Naive thymus-derived CD4-positive, alpha-beta T cell (primary cell): ENCODE measurements at regions of chr13 and their contacts with region 1.

Region 1: DNA sequence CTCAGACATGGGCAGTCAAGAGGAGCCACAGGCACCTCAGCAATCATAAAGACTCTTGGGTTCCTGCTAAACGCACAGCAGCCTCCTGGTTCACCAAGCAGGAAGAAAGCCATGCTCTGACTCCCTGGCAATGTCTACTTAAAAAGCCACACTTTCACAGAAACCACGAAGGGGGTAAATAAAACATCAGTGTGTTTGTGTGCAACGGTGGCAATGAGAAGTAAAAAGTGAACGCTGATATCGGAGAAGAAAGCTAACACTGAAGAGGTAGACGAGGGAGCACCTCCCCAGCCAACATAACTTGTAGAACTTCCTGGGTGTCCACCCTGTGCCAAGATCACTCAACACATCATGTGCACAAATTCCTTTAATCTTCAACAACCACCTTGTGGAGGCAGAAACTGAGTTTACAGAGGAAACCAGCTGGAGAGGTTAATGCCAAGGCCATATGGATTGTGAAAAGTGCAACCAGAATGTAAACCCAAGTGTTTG is 30.2 kb downstream of the HSPH1 start:
- DNase-seq: peak in 2 of 9 donors; percentile 6 to 8
- ATAC-seq: peak; percentile 30
- H3K4me3 ChIP-seq: no peak overlapping the region
- H3K4me3 Mint-ChIP-seq: peak overlapping the region in 3 of 10 donors; percentile 29 to 43 (median 41)
- H3K27ac ChIP-seq: no peak overlapping the region
- H3K27ac Mint-ChIP-seq: peak overlapping the region in 4 of 9 donors; percentile 11 to 62 (median 42)
- H3K4me1 ChIP-seq: no peaks in the 10 kb centered on the region
- H3K4me1 Mint-ChIP-seq: peaks cover 3 to 43% (median 30%) of the 10 kb centered on the region in 7 donors
- H3K27me3 ChIP-seq: no peaks in the 10 kb centered on the region
- H3K27me3 Mint-ChIP-seq: peaks cover 8 to 23% (median 15%) of the 10 kb centered on the region in 5 donors

Region 2: DNA sequence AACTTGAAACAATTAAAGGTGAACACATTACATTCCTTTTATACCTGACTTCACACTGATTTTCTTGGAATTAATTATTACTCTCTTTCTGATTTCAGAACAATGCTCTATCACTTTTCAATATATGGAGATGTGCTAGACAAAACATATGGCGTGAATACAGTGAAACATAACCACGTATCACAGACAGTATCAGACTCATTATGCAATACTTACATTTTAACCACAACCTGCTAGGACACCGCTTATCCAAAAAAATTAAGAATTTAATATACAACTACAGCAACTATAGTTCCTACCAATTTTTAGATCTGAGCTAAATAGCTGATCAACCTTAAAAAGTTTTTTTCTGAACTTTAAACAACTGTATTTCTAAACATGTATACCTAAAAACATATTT is 20.3 kb after region 1 on chr13:
- CTCF ChIA-PET with region 1: no interaction called
- POLR2A ChIA-PET with region 1: no interaction called
- intact Hi-C with region 1: loop called in 1 of 2 experiments (anchors 2 kb)
- DNase-seq: no peak
- ATAC-seq: no peak
- H3K4me3 ChIP-seq: no peak overlapping the region
- H3K4me3 Mint-ChIP-seq: no peak overlapping the region
- H3K27ac ChIP-seq: no peak overlapping the region
- H3K27ac Mint-ChIP-seq: no peak overlapping the region
- H3K4me1 ChIP-seq: no peaks in the 10 kb centered on the region
- H3K4me1 Mint-ChIP-seq: peaks cover 12 to 29% (median 21%) of the 10 kb centered on the region in 7 donors
- H3K27me3 ChIP-seq: no peaks in the 10 kb centered on the region
- H3K27me3 Mint-ChIP-seq: no peaks in the 10 kb centered on the region

Region 3: DNA sequence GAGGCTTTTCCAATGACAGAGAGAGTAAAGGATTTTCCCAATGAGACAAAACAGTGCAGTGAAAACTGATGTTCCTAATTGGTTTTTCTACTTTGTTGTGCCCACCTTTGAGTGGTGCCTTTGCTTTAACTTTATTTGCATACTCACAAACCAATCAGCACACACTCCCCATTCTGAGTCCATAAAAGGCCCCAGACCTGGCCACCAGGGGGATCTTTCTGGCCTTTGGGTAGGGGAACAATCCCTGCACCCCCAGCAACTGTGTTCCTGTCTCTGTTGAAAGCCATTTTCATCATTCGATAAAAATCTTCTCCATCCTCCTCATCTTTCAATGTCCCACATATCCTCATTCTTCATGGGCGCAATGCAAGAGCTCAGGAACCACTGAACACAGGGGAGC is 321.0 kb after region 1 on chr13:
- CTCF ChIA-PET with region 1: no interaction called
- POLR2A ChIA-PET with region 1: no interaction called
- intact Hi-C with region 1: no loop called
- DNase-seq: no peak
- ATAC-seq: no peak
- H3K4me3 ChIP-seq: no peak overlapping the region
- H3K4me3 Mint-ChIP-seq: no peak overlapping the region
- H3K27ac ChIP-seq: no peak overlapping the region
- H3K27ac Mint-ChIP-seq: no peak overlapping the region
- H3K4me1 ChIP-seq: no peaks in the 10 kb centered on the region
- H3K4me1 Mint-ChIP-seq: no peaks in the 10 kb centered on the region
- H3K27me3 ChIP-seq: peaks cover 0 to 4% of the 10 kb centered on the region in 2 donors
- H3K27me3 Mint-ChIP-seq: peaks cover 2 to 21% (median 15%) of the 10 kb centered on the region in 5 donors